ENCODE measurements at regions of chr5 and their contacts with region 1.

Region 1: DNA sequence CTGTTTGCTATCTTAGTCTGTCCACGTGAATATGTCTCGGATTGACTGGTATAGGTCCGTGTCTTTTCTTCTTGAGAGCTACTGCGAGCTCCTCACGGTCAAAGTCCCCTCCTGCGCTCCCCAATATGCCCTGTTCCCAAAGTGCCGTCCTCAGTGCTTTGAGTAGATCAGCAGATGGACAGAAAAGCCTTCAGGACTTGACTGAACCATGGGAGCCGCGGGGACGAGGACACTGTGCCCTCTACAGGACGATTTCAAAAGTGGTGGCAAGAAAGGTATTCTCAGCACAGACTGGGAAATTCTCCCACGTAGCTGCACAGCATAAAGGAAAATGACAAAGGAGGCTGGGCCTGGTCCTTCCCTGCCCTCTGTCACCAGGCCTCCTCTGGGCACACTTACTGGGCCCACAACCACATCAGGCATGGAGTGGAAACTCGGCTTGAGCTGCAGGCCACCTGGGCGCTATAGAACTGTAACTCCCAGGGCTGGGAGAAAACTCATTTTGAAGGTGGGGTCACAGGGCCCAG is 16.6 kb upstream of the MTMR12 start:
- DNase-seq: peak; percentile 75
- H3K4me3 Mint-ChIP-seq: no peak overlapping the region
- H3K27ac Mint-ChIP-seq: no peak overlapping the region
- H3K4me1 Mint-ChIP-seq: no peaks in the 10 kb centered on the region
- H3K27me3 Mint-ChIP-seq: no peaks in the 10 kb centered on the region

Region 2: DNA sequence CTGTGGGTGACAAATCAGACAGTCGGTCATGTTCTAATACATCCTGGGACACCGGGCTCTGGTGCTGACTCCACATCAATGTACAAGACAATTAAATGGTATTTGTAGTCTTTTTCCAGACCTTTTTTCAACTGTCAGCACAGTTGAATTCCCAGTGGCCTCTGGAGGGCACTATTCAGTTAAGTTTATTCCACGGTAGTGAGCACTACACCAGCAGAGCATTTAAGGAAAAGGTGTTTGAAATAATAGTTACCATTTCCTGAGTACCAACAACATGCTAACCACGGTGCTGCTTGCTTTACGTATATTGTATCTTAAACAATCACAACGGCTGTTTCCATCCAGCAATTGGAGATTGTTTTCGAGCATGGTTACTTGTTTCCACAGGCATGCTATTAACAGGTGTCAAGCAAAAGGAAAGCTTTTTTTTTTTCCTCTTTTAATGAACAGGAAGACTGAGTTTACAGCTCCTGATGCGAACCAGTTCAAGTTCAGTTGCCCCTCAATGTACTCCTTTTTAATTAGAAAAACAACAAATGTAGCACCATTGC is 503.8 kb before region 1 on chr5:
- CTCF ChIA-PET with region 1: no interaction called
- intact Hi-C with region 1: loop called (anchors 5 kb)
- DNase-seq: peak; percentile 73
- H3K4me3 Mint-ChIP-seq: no peak overlapping the region
- H3K27ac Mint-ChIP-seq: no peak overlapping the region
- H3K4me1 Mint-ChIP-seq: peaks cover 1% of the 10 kb centered on the region
- H3K27me3 Mint-ChIP-seq: no peaks in the 10 kb centered on the region

Region 3: DNA sequence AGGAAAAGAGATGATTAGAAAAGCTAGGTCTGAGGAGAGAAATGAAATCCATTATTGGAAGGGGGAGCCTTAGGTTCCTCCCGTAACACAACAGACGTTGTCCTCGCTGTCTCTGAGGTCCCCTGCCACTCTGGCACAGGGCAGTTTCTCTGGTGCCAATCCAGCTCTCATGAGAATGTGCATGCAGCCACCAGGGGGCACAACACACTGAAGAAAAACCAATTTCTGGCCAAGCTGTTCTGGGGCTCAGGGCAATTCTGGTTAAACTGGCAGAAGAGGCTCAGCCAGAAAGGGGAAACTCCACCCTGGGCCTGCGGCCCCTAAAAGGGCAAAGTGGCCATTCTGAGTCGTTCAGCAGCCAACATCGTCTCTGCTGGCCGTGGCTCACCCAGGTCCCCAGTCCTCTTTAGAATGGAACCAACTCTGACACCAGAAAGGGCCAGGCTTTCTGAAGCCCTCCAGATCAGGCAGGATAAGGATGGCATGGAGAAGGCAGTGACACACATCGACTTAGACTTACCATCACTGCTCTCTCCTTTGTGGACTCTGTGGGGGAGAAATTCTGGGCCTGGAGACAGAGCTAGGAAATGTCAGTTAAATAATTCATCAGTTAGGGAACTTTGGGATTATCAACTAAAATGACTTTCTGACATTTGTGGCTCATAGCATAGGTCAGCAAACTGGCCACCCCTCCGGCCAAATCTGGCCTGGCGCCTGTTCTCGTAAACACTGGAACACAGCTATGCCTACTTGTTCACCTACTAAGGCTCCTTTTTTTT is 96.7 kb before region 1 on chr5:
- CTCF ChIA-PET with region 1: interaction called, 148 read pairs
- intact Hi-C with region 1: loop called (anchors 1 kb)
- DNase-seq: peak; percentile 88
- H3K4me3 Mint-ChIP-seq: no peak overlapping the region
- H3K27ac Mint-ChIP-seq: no peak overlapping the region
- H3K4me1 Mint-ChIP-seq: peaks cover 7% of the 10 kb centered on the region
- H3K27me3 Mint-ChIP-seq: no peaks in the 10 kb centered on the region

Region 4: GRCh38 chr5:32261198-32261597 is 68.2 kb before region 1 on chr5:
- CTCF ChIA-PET with region 1: interaction called, 15 read pairs
- intact Hi-C with region 1: no loop called
- DNase-seq: peak; percentile 54
- H3K4me3 Mint-ChIP-seq: no peak overlapping the region
- H3K27ac Mint-ChIP-seq: peak overlapping the region; percentile 74
- H3K4me1 Mint-ChIP-seq: peaks cover 12% of the 10 kb centered on the region
- H3K27me3 Mint-ChIP-seq: no peaks in the 10 kb centered on the region

Region 5: DNA sequence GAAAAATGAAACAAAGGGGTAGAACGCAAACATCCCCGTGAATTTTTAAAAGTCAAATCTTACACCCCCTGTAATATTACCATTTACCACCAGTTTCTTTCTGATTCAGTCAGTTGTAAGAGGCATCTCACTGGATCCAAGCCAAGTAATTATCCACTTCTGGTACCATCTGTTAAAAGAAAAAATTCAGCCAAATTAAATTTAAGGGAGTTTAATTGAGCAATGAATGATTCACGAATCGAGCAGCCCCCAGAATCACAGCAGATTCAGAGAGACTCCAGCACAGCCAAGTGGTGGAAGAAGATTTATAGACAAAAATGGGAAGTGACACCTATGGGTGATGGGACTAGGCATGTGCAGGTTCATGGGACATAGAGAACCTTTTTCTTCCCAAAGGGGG is 13.3 kb after region 1 on chr5:
- CTCF ChIA-PET with region 1: interaction called, 10 read pairs
- intact Hi-C with region 1: no loop called
- DNase-seq: no peak
- H3K4me3 Mint-ChIP-seq: no peak overlapping the region
- H3K27ac Mint-ChIP-seq: no peak overlapping the region
- H3K4me1 Mint-ChIP-seq: no peaks in the 10 kb centered on the region
- H3K27me3 Mint-ChIP-seq: peaks cover 3% of the 10 kb centered on the region

Region 6: GRCh38 chr5:32462618-32463017 is 133.2 kb after region 1 on chr5:
- CTCF ChIA-PET with region 1: no interaction called
- intact Hi-C with region 1: no loop called
- DNase-seq: peak; percentile 71
- H3K4me3 Mint-ChIP-seq: no peak overlapping the region
- H3K27ac Mint-ChIP-seq: peak overlapping the region; percentile 89
- H3K4me1 Mint-ChIP-seq: peaks cover 13% of the 10 kb centered on the region
- H3K27me3 Mint-ChIP-seq: no peaks in the 10 kb centered on the region